Naive thymus-derived CD4-positive, alpha-beta T cell (primary cell): ENCODE measurements at regions of chr20 and their contacts with region 1.

Region 1: DNA sequence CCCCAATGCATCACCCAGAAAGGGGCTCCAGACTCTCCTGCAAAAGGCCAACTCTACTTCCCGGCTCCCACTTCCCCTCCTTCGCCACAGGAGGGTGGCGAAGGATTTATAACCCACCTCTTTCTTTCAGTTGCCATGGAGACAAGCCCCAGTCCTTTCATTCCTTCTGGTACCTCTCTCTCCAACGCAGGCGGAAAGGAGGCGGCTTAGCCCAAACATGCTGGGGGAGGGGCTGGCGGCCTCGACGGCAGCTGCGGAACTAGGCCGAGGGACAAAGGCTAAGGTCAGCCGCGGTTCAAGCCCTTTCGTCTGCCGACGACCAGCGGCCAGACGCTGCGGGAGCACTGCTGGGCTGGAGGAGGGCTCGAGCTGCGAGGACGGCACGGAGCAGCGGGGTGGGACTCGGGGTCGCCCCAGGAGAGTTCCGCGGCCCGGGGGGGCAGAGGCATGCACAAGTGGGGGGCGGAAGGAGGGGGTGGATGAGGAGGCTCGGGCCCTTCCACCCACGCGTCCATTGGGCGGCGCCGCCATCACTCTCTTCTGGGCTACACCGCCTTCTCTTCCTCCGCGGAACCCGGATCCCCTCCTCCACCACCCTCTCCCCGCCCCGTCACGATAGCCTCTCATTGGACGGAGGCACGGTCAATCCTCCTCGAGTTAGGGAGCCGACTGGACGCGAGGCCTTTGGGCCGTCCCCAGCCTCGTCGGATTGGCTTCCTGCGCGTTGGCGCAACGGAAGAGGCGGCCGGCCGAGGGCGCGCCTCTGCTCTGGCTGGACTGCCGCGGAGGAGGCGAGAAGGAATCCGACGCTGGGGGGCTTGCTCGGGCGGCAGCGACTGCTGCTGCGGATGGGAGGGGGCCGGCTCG is at the start of gene PANK2:
- DNase-seq: peak; percentile 85 to 96 (median 94)
- ATAC-seq: peak; percentile 98
- H3K4me3 ChIP-seq: peak within 1 kb of the TSS; percentile 82
- H3K4me3 Mint-ChIP-seq: peak within 1 kb of the TSS; percentile 96 to 100 (median 98)
- H3K27ac ChIP-seq: peak within 1 kb of the TSS; percentile 91
- H3K27ac Mint-ChIP-seq: peak within 1 kb of the TSS; percentile 87 to 99 (median 97)
- H3K4me1 ChIP-seq: peaks cover 10 to 25% of the 10 kb centered on the region in 2 donors
- H3K4me1 Mint-ChIP-seq: peaks cover 42 to 64% (median 55%) of the 10 kb centered on the region in 7 donors
- H3K27me3 ChIP-seq: no peaks in the 10 kb centered on the region
- H3K27me3 Mint-ChIP-seq: no peaks in the 10 kb centered on the region
- total RNA-seq, gene PANK2: 42.4 to 69.7 (median 59.1) TPM

Region 2: DNA sequence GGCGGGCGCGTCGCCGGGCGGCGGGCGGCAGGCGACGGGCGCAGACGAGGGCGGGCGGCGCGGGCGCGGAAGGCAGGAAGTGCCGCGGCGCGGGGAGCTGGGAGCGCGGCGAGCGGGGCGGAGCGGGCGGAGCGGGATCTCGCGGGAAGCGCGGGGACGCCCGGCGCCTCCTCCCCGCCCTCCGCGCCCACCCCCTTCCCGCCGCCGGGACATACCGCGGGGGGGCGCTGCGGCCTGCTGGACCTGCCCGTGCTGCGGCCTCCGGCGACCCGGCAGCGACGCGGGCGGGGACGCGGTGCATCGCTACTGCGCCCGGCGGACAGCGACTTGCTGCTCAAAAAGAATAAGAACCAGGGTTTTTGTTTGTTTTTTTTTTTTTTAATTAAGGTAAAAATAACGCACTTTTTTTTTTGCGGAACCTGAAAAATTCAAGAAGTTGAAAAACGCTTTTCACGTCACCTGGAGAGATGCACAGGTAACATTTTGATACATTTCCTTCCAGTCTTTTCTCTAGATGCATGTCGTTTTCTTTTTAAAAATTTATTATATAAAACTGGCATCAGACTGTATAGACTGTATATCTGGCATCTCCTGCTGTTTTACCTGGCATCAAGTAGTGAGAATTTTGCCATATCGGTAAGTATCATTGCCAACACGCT is 102.1 kb before region 1 on chr20 and contains the start of gene CENPB:
- CTCF ChIA-PET with region 1: interaction called, 3 read pairs
- POLR2A ChIA-PET with region 1: interaction called, 3 read pairs
- intact Hi-C with region 1: loop called in 1 of 2 experiments (anchors 2 kb)
- DNase-seq: peak; percentile 74 to 98 (median 88)
- ATAC-seq: peak; percentile 96
- H3K4me3 ChIP-seq: peak within 1 kb of the TSS; percentile 29
- H3K4me3 Mint-ChIP-seq: peak within 1 kb of the TSS; percentile 76 to 87 (median 83)
- H3K27ac ChIP-seq: peak within 1 kb of the TSS; percentile 62
- H3K27ac Mint-ChIP-seq: peak within 1 kb of the TSS; percentile 51 to 90 (median 76)
- H3K4me1 ChIP-seq: peaks cover 7 to 9% of the 10 kb centered on the region in 2 donors
- H3K4me1 Mint-ChIP-seq: peaks cover 30 to 45% (median 41%) of the 10 kb centered on the region in 7 donors
- H3K27me3 ChIP-seq: no peaks in the 10 kb centered on the region
- H3K27me3 Mint-ChIP-seq: peaks cover 0 to 12% (median 0%) of the 10 kb centered on the region in 5 donors
- total RNA-seq, gene CENPB: 35.3 to 73.6 (median 50.0) TPM

Region 3: GRCh38 chr20:3811467-3812258 is 77.2 kb before region 1 on chr20:
- CTCF ChIA-PET with region 1: no interaction called
- POLR2A ChIA-PET with region 1: interaction called, 5 read pairs
- intact Hi-C with region 1: loop called in 1 of 2 experiments (anchors 1 kb)
- DNase-seq: peak; percentile 79 to 96 (median 91)
- ATAC-seq: peak; percentile 97
- H3K4me3 ChIP-seq: peak overlapping the region; percentile 62
- H3K4me3 Mint-ChIP-seq: peak overlapping the region; percentile 77 to 96 (median 90)
- H3K27ac ChIP-seq: peak overlapping the region; percentile 84
- H3K27ac Mint-ChIP-seq: peak overlapping the region; percentile 94 to 100 (median 98)
- H3K4me1 ChIP-seq: peaks cover 70% of the 10 kb centered on the region in 2 donors
- H3K4me1 Mint-ChIP-seq: peaks cover 56 to 80% (median 71%) of the 10 kb centered on the region in 7 donors
- H3K27me3 ChIP-seq: no peaks in the 10 kb centered on the region
- H3K27me3 Mint-ChIP-seq: no peaks in the 10 kb centered on the region

Region 4: GRCh38 chr20:3911956-3912355 is 23.1 kb after region 1 on chr20:
- CTCF ChIA-PET with region 1: interaction called, 4 read pairs
- POLR2A ChIA-PET with region 1: interaction called, 3 read pairs
- intact Hi-C with region 1: loop called (anchors 1 kb)
- DNase-seq: no peak
- ATAC-seq: no peak
- H3K4me3 ChIP-seq: no peak overlapping the region
- H3K4me3 Mint-ChIP-seq: no peak overlapping the region
- H3K27ac ChIP-seq: no peak overlapping the region
- H3K27ac Mint-ChIP-seq: peak overlapping the region in 4 of 9 donors; percentile 10 to 72 (median 46)
- H3K4me1 ChIP-seq: peaks cover 5 to 11% of the 10 kb centered on the region in 2 donors
- H3K4me1 Mint-ChIP-seq: peaks cover 20 to 67% (median 43%) of the 10 kb centered on the region in 7 donors
- H3K27me3 ChIP-seq: no peaks in the 10 kb centered on the region
- H3K27me3 Mint-ChIP-seq: no peaks in the 10 kb centered on the region

Region 5: DNA sequence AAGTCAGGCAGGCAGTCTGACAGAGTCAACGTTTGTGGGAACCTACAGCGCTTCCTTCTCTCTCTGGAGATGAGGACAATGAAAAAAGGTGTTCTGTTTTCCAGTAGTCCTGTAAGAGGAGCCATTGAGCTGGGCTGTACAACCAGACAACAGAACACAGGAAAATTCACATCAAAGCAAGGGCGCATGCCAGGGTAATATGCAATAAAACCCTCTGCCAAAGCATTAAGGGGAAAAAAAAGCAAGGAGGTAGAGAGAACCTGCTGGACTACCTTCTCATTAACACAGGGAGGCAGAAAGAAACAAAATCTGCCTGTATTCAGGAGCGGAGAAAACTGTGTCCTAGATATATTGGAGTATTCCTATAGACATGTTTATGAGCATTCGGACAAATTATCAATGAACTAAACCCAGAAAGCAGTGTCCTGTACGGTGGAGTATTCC is 125.2 kb after region 1 on chr20:
- CTCF ChIA-PET with region 1: interaction called, 4 read pairs
- POLR2A ChIA-PET with region 1: no interaction called
- intact Hi-C with region 1: loop called (anchors 1 kb)
- DNase-seq: peak in 7 of 9 donors; percentile 18 to 54 (median 35)
- ATAC-seq: no peak
- H3K4me3 ChIP-seq: no peak overlapping the region
- H3K4me3 Mint-ChIP-seq: peak overlapping the region; percentile 72 to 95 (median 89)
- H3K27ac ChIP-seq: no peak overlapping the region
- H3K27ac Mint-ChIP-seq: peak overlapping the region; percentile 28 to 97 (median 78)
- H3K4me1 ChIP-seq: peaks cover 8 to 9% of the 10 kb centered on the region in 2 donors
- H3K4me1 Mint-ChIP-seq: peaks cover 26 to 52% (median 35%) of the 10 kb centered on the region in 7 donors
- H3K27me3 ChIP-seq: no peaks in the 10 kb centered on the region
- H3K27me3 Mint-ChIP-seq: no peaks in the 10 kb centered on the region

Region 6: GRCh38 chr20:4234128-4234527 is 345.3 kb after region 1 on chr20:
- CTCF ChIA-PET with region 1: no interaction called
- POLR2A ChIA-PET with region 1: no interaction called
- intact Hi-C with region 1: no loop called
- DNase-seq: no peak
- ATAC-seq: no peak
- H3K4me3 ChIP-seq: no peak overlapping the region
- H3K4me3 Mint-ChIP-seq: no peak overlapping the region
- H3K27ac ChIP-seq: no peak overlapping the region
- H3K27ac Mint-ChIP-seq: no peak overlapping the region
- H3K4me1 ChIP-seq: no peaks in the 10 kb centered on the region
- H3K4me1 Mint-ChIP-seq: peaks cover 0 to 2% (median 0%) of the 10 kb centered on the region in 7 donors
- H3K27me3 ChIP-seq: no peaks in the 10 kb centered on the region
- H3K27me3 Mint-ChIP-seq: peaks cover 12 to 38% (median 28%) of the 10 kb centered on the region in 5 donors